HepG2 (cell line): ENCODE measurements at regions of chr22 and their contacts with region 1.

Region 1: GRCh38 chr22:17554814-17555213 is 8.5 kb upstream of the SLC25A18 start:
- DNase-seq: no peak
- ATAC-seq: no peak
- H3K4me3 ChIP-seq: no peak overlapping the region
- H3K27ac ChIP-seq: no peak overlapping the region
- H3K4me1 ChIP-seq: 0 out of 2 replicates have a peak, but pooled peaks cover 8% of the 10 kb centered on the region
- H3K27me3 ChIP-seq: peaks cover 0 to 43% of the 10 kb centered on the region in 2 experiments; a peak in 3 of 5 replicates
- CTCF ChIP-seq: no peak
- EP300 ChIP-seq: no peak
- POLR2A ChIP-seq: no peak
- RAD21 ChIP-seq: no peak

Region 2: DNA sequence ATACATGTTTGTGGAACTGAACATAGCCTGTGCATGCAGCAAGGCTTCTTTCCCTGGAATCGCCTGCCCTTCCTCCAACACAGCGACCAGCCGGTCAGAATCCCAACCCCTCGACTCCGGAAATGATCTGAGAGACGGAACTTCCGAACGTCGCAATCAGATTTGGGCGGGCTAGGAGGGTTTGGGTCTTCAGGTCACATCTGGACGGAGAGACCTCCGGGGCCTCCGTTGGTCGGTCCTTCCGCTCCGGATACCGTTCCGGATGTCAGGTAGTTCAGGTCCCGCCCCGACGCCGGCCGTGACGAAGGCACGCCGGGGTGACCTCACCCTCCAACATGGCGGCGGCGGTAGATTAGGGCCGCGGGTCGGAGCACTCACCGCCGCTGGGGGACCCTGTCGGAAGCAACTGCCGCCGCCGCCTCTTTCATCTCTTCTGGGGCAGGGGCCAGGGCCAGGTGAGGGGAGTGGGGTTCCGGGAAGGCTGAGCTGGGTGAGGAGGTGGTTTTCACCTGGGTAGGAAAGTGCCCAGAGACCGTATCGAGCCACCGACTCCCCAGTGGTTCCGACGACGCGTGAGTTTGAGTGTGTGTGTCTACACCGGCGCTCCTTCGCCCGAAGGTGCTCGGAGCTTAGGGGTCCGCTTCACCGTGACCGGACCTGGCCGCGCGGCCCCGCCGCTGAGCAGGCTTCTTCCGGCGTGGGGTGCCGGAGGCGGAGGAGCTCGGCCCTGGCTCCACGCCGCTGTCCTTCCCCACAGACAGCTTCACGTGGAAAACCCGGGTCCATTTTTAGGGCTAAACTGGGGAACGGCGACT is 83.8 kb after region 1 on chr22 and contains the start of gene BCL2L13:
- CTCF ChIA-PET with region 1: no interaction called
- POLR2A ChIA-PET with region 1: interaction called, 6 read pairs
- in situ Hi-C with region 1: no loop called
- intact Hi-C with region 1: loop called (anchors 5 kb)
- DNase-seq: peak; percentile 92
- ATAC-seq: peak; percentile 94
- H3K4me3 ChIP-seq: peak within 1 kb of the TSS; percentile 65 to 95 (median 95)
- H3K27ac ChIP-seq: peak within 1 kb of the TSS; percentile 99
- H3K4me1 ChIP-seq: peaks cover 26% of the 10 kb centered on the region
- H3K27me3 ChIP-seq: no peaks in the 10 kb centered on the region; a peak in 1 of 5 replicates
- CTCF ChIP-seq: peak; percentile 13; the same call in 1 of the 2 replicates
- EP300 ChIP-seq: peak in 1 of 2 experiments; percentile 43; a peak in 1 of 4 replicates
- POLR2A ChIP-seq: peak; percentile 71 to 79
- RAD21 ChIP-seq: no peak
- total RNA-seq, gene BCL2L13: 13.4 and 13.5 TPM in 2 replicates

Region 3: GRCh38 chr22:17742527-17742902 is 187.7 kb after region 1 on chr22:
- CTCF ChIA-PET with region 1: no interaction called
- POLR2A ChIA-PET with region 1: no interaction called
- in situ Hi-C with region 1: no loop called
- intact Hi-C with region 1: loop called (anchors 5 kb)
- DNase-seq: peak; percentile 63
- ATAC-seq: peak; percentile 93
- H3K4me3 ChIP-seq: no peak overlapping the region
- H3K27ac ChIP-seq: no peak overlapping the region
- H3K4me1 ChIP-seq: no peaks in the 10 kb centered on the region
- H3K27me3 ChIP-seq: no peaks in the 10 kb centered on the region
- CTCF ChIP-seq: peak; percentile 90
- EP300 ChIP-seq: no peak
- POLR2A ChIP-seq: no peak
- RAD21 ChIP-seq: peak; percentile 91